ENCODE measurements at regions of chr15 and their contacts with region 1.

Region 1: GRCh38 chr15:101303408-101303807 is 8.4 kb upstream of the SNRPA1 start:
- DNase-seq: no peak
- H3K4me3 ChIP-seq: no peak overlapping the region
- H3K27ac ChIP-seq: no peak overlapping the region
- H3K4me1 ChIP-seq: no peaks in the 10 kb centered on the region
- H3K27me3 ChIP-seq: peaks cover 0 to 13% of the 10 kb centered on the region in 2 donors
- CTCF ChIP-seq: no peak

Region 2: GRCh38 chr15:100713163-100713867 is 590.1 kb before region 1 on chr15:
- intact Hi-C with region 1: no loop called
- DNase-seq: peak; percentile 18 to 51
- H3K4me3 ChIP-seq: no peak overlapping the region
- H3K27ac ChIP-seq: no peak overlapping the region
- H3K4me1 ChIP-seq: no peaks in the 10 kb centered on the region
- H3K27me3 ChIP-seq: no peaks in the 10 kb centered on the region
- CTCF ChIP-seq: no peak

Region 3: GRCh38 chr15:101489633-101490407 is 186.4 kb after region 1 on chr15 and contains the start of gene PCSK6:
- intact Hi-C with region 1: loop called (anchors 5 kb)
- DNase-seq: no peak
- H3K4me3 ChIP-seq: peak within 1 kb of the TSS; percentile 16 to 42
- H3K27ac ChIP-seq: no peak within 1 kb of the TSS
- H3K4me1 ChIP-seq: peaks cover 0 to 12% (median 2%) of the 10 kb centered on the region in 4 donors
- H3K27me3 ChIP-seq: peaks cover 0 to 45% of the 10 kb centered on the region in 2 donors
- CTCF ChIP-seq: no peak

Region 4: GRCh38 chr15:101641166-101641764 is 337.9 kb after region 1 on chr15:
- intact Hi-C with region 1: loop called (anchors 5 kb)
- DNase-seq: peak; percentile 72 to 74
- H3K4me3 ChIP-seq: no peak overlapping the region
- H3K27ac ChIP-seq: no peak overlapping the region
- H3K4me1 ChIP-seq: peaks cover 0 to 6% (median 3%) of the 10 kb centered on the region in 4 donors
- H3K27me3 ChIP-seq: no peaks in the 10 kb centered on the region
- CTCF ChIP-seq: peak; percentile 85 to 91

Measured in tibial artery (tissue), 4 donors.